HCT116 (cell line): ENCODE measurements at regions of chr11 and their contacts with region 1.

Region 1: DNA sequence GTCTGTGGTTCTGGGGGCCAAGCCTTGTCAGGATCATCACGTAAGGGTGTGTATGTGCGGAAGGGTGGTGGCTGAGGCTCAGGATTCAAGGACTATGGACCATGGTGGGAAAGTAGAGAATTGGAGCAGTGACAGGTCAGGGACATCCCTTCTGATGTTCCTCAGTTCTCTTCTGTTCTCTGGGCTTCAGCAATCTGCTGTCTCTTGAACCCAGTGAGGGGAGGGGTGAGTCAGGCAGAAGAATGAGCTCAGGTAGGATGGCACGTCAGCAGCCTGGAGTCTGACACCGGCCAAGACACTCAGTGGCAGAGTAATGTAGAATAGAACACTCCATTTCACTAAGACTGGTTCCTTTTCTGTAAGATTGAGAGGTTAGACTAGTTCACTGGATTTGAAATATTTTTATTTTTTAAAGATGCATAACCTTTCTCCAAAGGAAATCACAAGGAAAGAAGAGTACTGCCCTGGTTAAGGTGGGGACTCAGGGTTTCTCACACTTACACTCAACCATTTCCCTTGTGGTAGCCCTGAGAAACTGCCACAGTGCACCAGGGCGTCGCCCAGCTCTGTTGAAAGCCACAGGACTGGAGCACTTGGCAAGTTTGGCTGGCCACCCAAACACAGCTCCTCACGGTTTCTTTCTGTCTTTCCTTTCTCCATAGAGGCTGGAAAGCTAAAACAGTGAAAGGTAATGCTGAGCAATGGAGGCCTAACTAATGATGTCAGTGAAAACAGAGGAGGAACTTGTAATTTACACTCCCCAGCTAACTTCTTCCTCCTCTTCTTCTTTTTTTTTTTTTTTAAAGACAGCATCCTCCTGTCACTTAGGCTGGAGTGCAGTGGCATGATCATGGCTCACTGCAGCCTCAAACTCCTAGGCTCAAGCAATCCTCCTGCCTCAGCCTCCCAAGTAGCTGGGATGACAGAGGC is 23.1 kb upstream of the MICAL2 start:
- DNase-seq: peak; percentile 38
- ATAC-seq: peak; percentile 68
- H3K4me3 ChIP-seq: peak overlapping the region; percentile 17 to 50; a peak in 3 of 4 replicates
- H3K27ac ChIP-seq: peak overlapping the region; percentile 73
- H3K4me1 ChIP-seq: peaks cover 48 to 72% of the 10 kb centered on the region in 2 experiments
- H3K27me3 ChIP-seq: no peaks in the 10 kb centered on the region
- CTCF ChIP-seq: peak in 2 of 3 experiments; percentile 34 to 40; a peak in 3 of 6 replicates
- POLR2A ChIP-seq: no peak
- RAD21 ChIP-seq: no peak

Region 2: DNA sequence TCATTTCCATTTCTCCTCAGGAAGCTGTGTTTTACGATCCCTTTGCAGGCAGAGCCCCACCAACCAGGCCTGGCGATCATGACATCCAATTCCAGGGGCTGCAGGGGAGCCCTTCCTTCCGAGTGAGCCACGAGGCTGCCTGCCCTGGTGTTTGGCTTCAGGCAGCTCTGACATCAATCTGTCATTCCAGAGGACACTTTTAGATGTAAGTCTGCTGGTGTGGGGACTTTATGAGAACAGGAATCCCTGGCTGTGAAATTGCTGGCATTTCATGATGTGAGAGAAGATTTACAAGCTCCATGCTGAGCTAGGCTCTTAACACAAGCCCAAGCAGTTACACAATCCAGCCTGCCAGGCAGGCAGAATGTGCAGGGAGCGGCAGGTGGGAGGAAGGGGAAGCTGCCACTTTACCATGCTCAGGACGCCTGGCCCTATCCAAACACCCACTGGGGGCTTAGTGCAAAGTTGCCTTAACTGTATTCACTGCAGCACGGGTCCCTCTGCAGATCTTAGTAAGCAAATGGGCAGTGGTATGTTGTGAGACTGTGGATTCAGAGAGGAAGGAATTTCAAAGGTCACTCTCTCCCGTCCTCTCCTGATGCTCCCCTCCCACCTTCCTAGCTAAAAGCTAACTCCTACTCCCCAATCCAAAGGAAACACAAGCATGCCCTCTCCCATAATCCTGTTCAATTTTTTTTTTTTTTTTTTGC is 20.4 kb before region 1 on chr11:
- CTCF ChIA-PET with region 1: interaction called, 5 read pairs
- POLR2A ChIA-PET with region 1: interaction called, 43 read pairs
- RAD21 ChIA-PET with region 1: interaction called in 1 of 2 experiments, 4 read pairs
- intact Hi-C with region 1: loop called (anchors 1 kb)
- DNase-seq: no peak
- ATAC-seq: peak; percentile 49
- H3K4me3 ChIP-seq: peak overlapping the region in 1 of 2 experiments; percentile 30; a peak in 2 of 4 replicates
- H3K27ac ChIP-seq: peak overlapping the region; percentile 82
- H3K4me1 ChIP-seq: peaks cover 31 to 50% of the 10 kb centered on the region in 2 experiments
- H3K27me3 ChIP-seq: no peaks in the 10 kb centered on the region
- CTCF ChIP-seq: no peak
- POLR2A ChIP-seq: no peak
- RAD21 ChIP-seq: no peak

Region 3: DNA sequence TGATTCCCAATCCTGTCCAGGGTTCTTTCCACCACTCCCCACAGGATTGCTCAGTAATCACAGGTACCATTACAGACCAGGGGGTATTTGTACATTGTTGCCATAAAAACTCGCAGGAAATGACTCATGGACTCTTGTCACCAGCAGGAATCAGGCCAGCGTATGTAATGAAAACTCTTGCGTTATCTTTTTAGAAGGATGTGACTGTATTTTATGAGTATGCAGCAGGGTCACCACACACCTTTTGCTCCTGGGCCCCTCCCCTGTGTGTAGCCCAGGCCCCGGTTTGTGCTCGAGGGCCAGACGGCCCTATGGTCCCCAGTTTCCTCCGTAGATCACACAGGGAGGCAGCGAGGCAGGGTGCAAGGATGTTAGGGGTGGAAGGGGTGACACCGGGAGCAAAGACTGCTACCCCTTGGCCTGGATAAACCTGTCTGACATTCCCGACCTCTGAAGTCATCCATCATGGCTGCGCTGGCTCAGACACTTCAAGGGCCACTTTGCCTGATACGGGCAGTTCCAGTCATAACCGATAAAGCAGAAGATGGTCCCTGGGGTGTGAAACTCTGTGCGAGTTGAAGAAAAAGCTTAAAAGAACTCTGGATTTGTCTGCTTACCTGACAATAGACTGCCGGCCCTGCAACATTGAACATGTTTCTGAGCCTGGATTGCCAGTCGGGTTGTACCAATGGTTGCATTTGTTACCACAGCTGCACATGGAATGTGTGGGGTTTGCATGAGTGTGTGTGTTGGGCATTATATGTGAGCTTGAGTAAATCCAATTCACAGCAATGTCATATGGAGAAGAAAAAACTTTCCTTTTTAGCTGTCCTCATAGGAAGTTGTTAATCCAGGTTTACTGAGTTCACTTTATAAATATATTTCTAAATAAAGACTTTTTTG is 80.0 kb after region 1 on chr11:
- CTCF ChIA-PET with region 1: interaction called, 4 read pairs
- POLR2A ChIA-PET with region 1: interaction called, 13 read pairs
- RAD21 ChIA-PET with region 1: no interaction called
- intact Hi-C with region 1: no loop called
- DNase-seq: peak; percentile 95
- ATAC-seq: peak; percentile 64
- H3K4me3 ChIP-seq: peak overlapping the region in 1 of 2 experiments; percentile 47; a peak in 2 of 4 replicates
- H3K27ac ChIP-seq: peak overlapping the region; percentile 87
- H3K4me1 ChIP-seq: peaks cover 69 to 99% of the 10 kb centered on the region in 2 experiments
- H3K27me3 ChIP-seq: no peaks in the 10 kb centered on the region
- CTCF ChIP-seq: no peak
- POLR2A ChIP-seq: no peak
- RAD21 ChIP-seq: peak; percentile 48

Region 4: GRCh38 chr11:12182676-12183541 is 95.6 kb after region 1 on chr11:
- CTCF ChIA-PET with region 1: no interaction called
- POLR2A ChIA-PET with region 1: interaction called, 6 read pairs
- RAD21 ChIA-PET with region 1: no interaction called
- intact Hi-C with region 1: loop called (anchors 5 kb)
- DNase-seq: peak; percentile 74
- ATAC-seq: peak; percentile 73
- H3K4me3 ChIP-seq: peak overlapping the region; percentile 2 to 39; a peak in 3 of 4 replicates
- H3K27ac ChIP-seq: peak overlapping the region; percentile 85
- H3K4me1 ChIP-seq: peaks cover 52 to 74% of the 10 kb centered on the region in 2 experiments
- H3K27me3 ChIP-seq: no peaks in the 10 kb centered on the region
- CTCF ChIP-seq: no peak
- POLR2A ChIP-seq: no peak
- RAD21 ChIP-seq: 0 out of 2 replicates have a peak, but pooled peaks have one; percentile 7

Region 5: GRCh38 chr11:12235947-12236743 is 148.8 kb after region 1 on chr11:
- CTCF ChIA-PET with region 1: interaction called, 13 read pairs
- POLR2A ChIA-PET with region 1: interaction called, 4 read pairs
- RAD21 ChIA-PET with region 1: interaction called, 3 read pairs
- intact Hi-C with region 1: loop called (anchors 10 kb)
- DNase-seq: peak; percentile 32
- ATAC-seq: peak; percentile 75
- H3K4me3 ChIP-seq: no peak overlapping the region
- H3K27ac ChIP-seq: no peak overlapping the region
- H3K4me1 ChIP-seq: peaks cover 4 to 23% of the 10 kb centered on the region in 2 experiments; a peak in 3 of 4 replicates
- H3K27me3 ChIP-seq: no peaks in the 10 kb centered on the region
- CTCF ChIP-seq: peak; percentile 55 to 82 (median 69)
- POLR2A ChIP-seq: no peak
- RAD21 ChIP-seq: peak; percentile 83

Region 6: GRCh38 chr11:12269104-12269441 is 181.7 kb after region 1 on chr11:
- CTCF ChIA-PET with region 1: no interaction called
- POLR2A ChIA-PET with region 1: no interaction called
- RAD21 ChIA-PET with region 1: no interaction called
- intact Hi-C with region 1: no loop called
- DNase-seq: no peak
- ATAC-seq: no peak
- H3K4me3 ChIP-seq: no peak overlapping the region
- H3K27ac ChIP-seq: no peak overlapping the region
- H3K4me1 ChIP-seq: peaks cover 8 to 15% of the 10 kb centered on the region in 2 experiments
- H3K27me3 ChIP-seq: no peaks in the 10 kb centered on the region
- CTCF ChIP-seq: no peak
- POLR2A ChIP-seq: no peak
- RAD21 ChIP-seq: no peak

Region 7: DNA sequence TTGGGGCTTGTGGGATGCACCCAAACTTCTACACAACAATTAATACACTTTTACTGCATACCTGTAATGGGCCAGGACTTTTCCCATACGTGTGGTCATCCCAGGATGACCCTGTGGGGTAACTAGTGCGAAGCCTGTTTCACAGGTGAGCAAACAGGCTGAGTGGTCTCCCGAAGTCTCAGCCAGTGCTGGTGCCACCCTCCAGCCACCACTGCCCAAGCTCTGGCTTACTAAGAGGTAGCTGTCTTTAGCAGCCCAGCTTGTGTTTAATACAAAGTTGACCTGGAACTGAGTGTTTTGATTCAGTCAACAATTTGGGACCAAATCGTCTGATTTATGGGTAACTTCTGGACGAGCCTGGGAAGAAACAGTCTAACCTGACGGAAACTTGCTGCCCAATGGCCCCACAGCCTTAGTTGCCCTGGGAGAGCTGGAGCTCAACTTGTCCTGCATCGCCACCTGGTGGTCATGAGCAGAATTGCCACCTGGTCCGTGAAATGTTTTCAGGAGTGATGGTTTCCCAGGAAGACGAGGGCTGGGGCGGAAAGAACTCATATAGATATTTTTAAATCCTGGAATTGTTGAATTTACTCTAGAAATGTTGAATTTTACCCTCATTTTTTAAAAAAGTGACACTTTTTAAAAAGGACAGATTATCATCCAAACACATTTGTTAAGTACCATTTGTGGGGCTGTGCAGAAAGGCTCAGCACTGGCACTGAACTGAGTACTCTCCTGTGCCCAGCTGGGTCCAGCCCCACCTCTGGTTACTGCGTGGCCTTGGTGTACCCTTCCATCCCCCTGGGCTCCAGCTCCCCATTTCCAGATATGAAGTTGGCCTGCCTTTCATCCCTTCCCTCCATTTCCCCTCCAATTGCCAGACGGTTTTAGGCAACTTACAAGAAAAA is 194.5 kb after region 1 on chr11:
- CTCF ChIA-PET with region 1: interaction called, 31 read pairs
- POLR2A ChIA-PET with region 1: interaction called, 3 read pairs
- RAD21 ChIA-PET with region 1: interaction called in 1 of 2 experiments, 6 read pairs
- intact Hi-C with region 1: loop called (anchors 1 kb)
- DNase-seq: peak; percentile 58
- ATAC-seq: peak; percentile 83
- H3K4me3 ChIP-seq: no peak overlapping the region
- H3K27ac ChIP-seq: no peak overlapping the region
- H3K4me1 ChIP-seq: peaks cover 10 to 29% of the 10 kb centered on the region in 2 experiments
- H3K27me3 ChIP-seq: no peaks in the 10 kb centered on the region
- CTCF ChIP-seq: peak; percentile 91 to 96 (median 95)
- POLR2A ChIP-seq: no peak
- RAD21 ChIP-seq: peak; percentile 100

Region 8: GRCh38 chr11:12469451-12469850 is 382.1 kb after region 1 on chr11:
- CTCF ChIA-PET with region 1: no interaction called
- POLR2A ChIA-PET with region 1: no interaction called
- RAD21 ChIA-PET with region 1: no interaction called
- intact Hi-C with region 1: no loop called
- DNase-seq: no peak
- ATAC-seq: no peak
- H3K4me3 ChIP-seq: no peak overlapping the region
- H3K27ac ChIP-seq: no peak overlapping the region
- H3K4me1 ChIP-seq: no peaks in the 10 kb centered on the region
- H3K27me3 ChIP-seq: no peaks in the 10 kb centered on the region
- CTCF ChIP-seq: no peak
- POLR2A ChIP-seq: no peak
- RAD21 ChIP-seq: no peak